Heart left ventricle (tissue), 16 donors: ENCODE measurements at regions of chr13 and their contacts with region 1.

Region 1: GRCh38 chr13:30132623-30133553 is 174.5 kb downstream of the KATNAL1 start:
- DNase-seq: peak; percentile 93 to 98 (median 96)
- ATAC-seq: peak; percentile 88 to 98 (median 96)
- H3K4me3 ChIP-seq: peak overlapping the region in 1 of 12 donors; percentile 3
- H3K27ac ChIP-seq: peak overlapping the region in 1 of 12 donors; percentile 29
- H3K4me1 ChIP-seq: peaks cover 0 to 16% (median 2%) of the 10 kb centered on the region in 12 donors
- H3K27me3 ChIP-seq: no peaks in the 10 kb centered on the region
- CTCF ChIP-seq: peak; percentile 87 to 98 (median 92)
- POLR2A ChIP-seq: no peak

Region 2: DNA sequence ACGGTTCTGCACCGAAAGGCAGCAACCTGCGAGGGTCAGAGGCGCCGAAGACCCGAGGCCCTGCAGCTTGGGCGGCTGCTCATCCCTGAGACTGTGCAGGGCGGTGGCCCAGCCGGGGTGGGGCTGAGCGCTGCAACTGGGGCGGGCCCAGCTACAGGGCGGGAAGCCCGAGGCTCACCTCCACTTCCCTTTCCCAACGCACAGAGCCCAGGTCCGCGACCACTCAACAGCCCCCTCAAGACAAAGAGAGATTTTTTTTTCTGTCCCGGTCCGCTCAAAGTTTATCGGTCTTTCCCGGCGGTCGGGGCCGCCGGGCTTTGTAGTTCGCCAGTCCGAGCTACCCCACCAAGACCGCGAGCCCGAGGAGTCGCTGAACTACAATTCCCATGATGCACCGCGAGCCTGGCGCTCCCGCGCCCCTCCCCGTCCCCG is 173.9 kb after region 1 on chr13:
- intact Hi-C with region 1: loop called in 1 of 10 experiments (anchors 5 kb)
- DNase-seq: peak; percentile 95 to 96 (median 96)
- ATAC-seq: peak; percentile 93 to 97 (median 96)
- H3K4me3 ChIP-seq: peak overlapping the region; percentile 80 to 100 (median 96)
- H3K27ac ChIP-seq: peak overlapping the region; percentile 87 to 98 (median 96)
- H3K4me1 ChIP-seq: peaks cover 3 to 56% (median 28%) of the 10 kb centered on the region in 12 donors
- H3K27me3 ChIP-seq: no peaks in the 10 kb centered on the region
- CTCF ChIP-seq: no peak
- POLR2A ChIP-seq: no peak

Region 3: GRCh38 chr13:30457306-30457891 is 324.5 kb after region 1 on chr13:
- intact Hi-C with region 1: loop called (anchors 5 kb)
- DNase-seq: no peak
- ATAC-seq: no peak
- H3K4me3 ChIP-seq: no peak overlapping the region
- H3K27ac ChIP-seq: no peak overlapping the region
- H3K4me1 ChIP-seq: peaks cover 0 to 20% (median 11%) of the 10 kb centered on the region in 12 donors
- H3K27me3 ChIP-seq: no peaks in the 10 kb centered on the region
- CTCF ChIP-seq: no peak
- POLR2A ChIP-seq: no peak

Region 4: DNA sequence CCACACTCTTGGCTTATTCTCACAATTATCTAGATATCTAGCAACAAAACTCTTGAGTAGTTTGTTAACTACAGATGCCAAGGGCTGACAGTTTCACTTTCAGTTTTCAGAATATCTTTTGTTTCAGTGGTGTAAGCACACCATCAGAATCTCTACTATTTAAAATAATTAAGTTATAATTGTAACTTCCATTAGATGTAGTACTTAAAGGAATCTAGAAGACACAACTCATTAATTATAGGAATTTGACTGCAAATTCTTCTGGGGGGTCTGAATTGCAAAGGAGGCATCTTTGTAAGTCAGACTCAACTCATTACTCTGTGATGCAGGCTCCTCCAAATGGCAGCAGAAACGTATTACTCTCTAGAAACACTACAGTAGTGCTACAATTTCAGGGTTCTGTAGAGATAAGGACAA is 440.0 kb after region 1 on chr13:
- intact Hi-C with region 1: loop called in 6 of 10 experiments (anchors 10 kb)
- DNase-seq: peak in 1 of 5 donors; percentile 17
- ATAC-seq: peak in 3 of 4 donors; percentile 59 to 81 (median 62)
- H3K4me3 ChIP-seq: peak overlapping the region in 10 of 12 donors; percentile 28 to 56 (median 42)
- H3K27ac ChIP-seq: peak overlapping the region in 11 of 12 donors; percentile 1 to 82 (median 53)
- H3K4me1 ChIP-seq: peaks cover 0 to 57% (median 15%) of the 10 kb centered on the region in 12 donors
- H3K27me3 ChIP-seq: no peaks in the 10 kb centered on the region
- CTCF ChIP-seq: peak in 6 of 12 donors; percentile 35 to 52 (median 42)
- POLR2A ChIP-seq: no peak

Region 5: GRCh38 chr13:30617315-30618185 is 484.7 kb after region 1 on chr13 and contains the start of gene USPL1:
- intact Hi-C with region 1: loop called in 1 of 10 experiments (anchors 5 kb)
- DNase-seq: peak; percentile 99
- ATAC-seq: peak; percentile 95 to 98 (median 96)
- H3K4me3 ChIP-seq: peak within 1 kb of the TSS; percentile 61 to 89 (median 84)
- H3K27ac ChIP-seq: peak within 1 kb of the TSS; percentile 98 to 100 (median 99)
- H3K4me1 ChIP-seq: peaks cover 0 to 42% (median 25%) of the 10 kb centered on the region in 12 donors
- H3K27me3 ChIP-seq: no peaks in the 10 kb centered on the region
- CTCF ChIP-seq: peak in 11 of 12 donors; percentile 14 to 48 (median 32)
- POLR2A ChIP-seq: peak; percentile 40 to 92
- total RNA-seq, gene USPL1: 9.0 to 14.3 (median 10.2) TPM

Region 6: DNA sequence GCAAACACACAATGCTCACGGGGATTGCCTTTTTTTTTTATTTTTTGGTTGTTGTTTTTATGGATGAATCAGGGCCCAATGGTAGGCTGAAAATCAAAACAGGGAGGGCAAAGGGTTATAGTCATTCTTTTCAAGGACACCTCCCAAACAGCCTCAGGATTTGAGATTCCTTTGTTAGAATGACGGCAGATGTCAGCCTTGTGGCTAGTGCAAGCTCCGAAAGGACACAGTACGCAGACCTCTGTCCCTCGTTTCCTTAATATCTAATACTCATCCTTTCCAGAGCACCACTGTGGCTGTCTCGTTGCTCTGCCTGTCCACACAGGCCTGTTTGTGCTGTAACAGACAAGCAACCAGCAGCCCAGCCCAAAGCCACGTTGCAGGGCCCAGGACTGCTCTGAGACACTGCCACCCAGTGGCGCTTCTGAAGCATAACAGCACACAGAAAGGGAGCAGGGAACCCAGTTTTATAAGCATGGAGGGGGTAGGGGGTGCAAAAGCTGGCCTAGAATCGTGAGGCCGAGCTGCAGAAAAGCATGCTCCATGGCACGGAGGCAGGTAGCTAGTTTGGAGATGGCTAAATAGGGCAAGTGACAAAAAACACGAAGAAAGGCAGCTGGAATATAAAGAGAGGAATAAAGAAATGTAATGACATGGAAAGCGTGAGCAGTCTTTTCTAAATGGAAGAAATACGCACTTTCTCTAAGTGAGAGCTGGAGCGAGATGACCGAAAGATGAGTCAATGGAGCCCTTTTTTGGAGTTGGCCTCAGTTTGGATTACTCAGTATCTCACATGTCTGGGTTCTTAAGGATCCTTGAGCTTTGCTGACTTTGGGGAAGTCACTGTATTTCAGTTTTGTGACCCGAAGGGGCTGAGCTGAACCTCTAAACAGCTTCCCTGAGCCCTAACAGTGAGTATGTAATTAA is 732.5 kb after region 1 on chr13:
- intact Hi-C with region 1: loop called in 3 of 10 experiments (anchors 5 to 10 kb)
- DNase-seq: peak; percentile 75 to 88 (median 82)
- ATAC-seq: peak; percentile 77 to 87 (median 80)
- H3K4me3 ChIP-seq: no peak overlapping the region
- H3K27ac ChIP-seq: peak overlapping the region; percentile 14 to 82 (median 64)
- H3K4me1 ChIP-seq: peaks cover 0 to 47% (median 17%) of the 10 kb centered on the region in 12 donors
- H3K27me3 ChIP-seq: no peaks in the 10 kb centered on the region
- CTCF ChIP-seq: peak; percentile 83 to 95 (median 90)
- POLR2A ChIP-seq: no peak